Activated B cell treated with CpG ODN at 0.5 μM for 24 hours (primary cell): ENCODE measurements at regions of chr2 and their contacts with region 1.

Region 1: DNA sequence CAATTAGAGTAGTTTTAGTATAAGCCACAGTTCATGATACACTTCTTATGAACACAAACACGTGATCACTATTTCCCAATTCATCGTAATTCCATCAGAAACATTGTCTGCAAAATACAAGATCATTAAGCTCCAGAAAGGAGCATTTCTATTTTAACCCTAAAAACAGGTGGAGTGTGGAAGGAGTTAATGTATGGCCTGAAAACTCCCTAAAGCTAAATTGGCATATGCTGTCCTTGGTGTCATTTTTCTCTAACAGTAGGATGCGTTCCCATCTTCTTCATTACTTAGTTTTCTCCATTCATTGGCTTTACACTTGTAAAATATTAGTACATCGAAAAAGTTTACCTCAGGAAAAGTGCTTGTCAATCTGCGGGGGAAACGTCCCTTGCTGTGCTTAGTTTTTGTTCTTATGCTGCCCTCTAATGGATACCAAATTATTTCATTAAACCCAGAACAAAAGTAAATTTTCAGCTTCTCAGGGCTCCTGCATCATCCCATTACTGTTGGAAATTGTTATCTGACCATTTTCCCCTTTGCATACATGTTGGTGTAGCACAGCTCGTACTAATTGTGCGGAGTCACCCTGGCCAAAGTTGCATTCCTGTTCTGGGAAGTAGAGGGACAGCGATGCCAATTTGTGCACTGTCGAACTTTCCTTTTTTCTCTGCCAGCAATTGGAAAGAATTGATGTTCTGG is 153.4 kb downstream of the GPD2 start:
- DNase-seq: no peak
- ATAC-seq: peak; percentile 54
- H3K4me3 Mint-ChIP-seq: no peak overlapping the region
- H3K27ac Mint-ChIP-seq: no peak overlapping the region
- H3K4me1 Mint-ChIP-seq: peaks cover 2% of the 10 kb centered on the region
- H3K27me3 Mint-ChIP-seq: no peaks in the 10 kb centered on the region
- CTCF ChIP-seq: no peak

Region 2: DNA sequence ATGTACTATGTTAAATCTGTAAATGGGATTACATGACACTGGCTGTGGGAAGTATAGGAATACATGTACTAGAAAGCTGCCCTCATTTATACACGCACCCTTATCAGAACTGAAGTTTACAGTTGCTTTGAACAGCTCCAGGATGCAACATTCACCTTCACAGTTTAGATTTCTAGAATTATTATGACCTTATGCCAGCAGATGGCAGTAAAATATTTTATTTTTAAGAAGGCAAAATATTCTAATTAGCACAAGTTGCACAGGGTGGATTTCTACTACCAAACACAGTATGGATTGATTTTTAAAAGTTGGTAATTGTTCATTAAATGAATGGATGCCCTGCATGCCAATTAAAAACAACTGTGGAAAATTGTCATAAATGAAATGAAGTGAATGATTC is 1220.6 kb before region 1 on chr2:
- CTCF ChIA-PET with region 1: interaction called, 5 read pairs
- POLR2A ChIA-PET with region 1: no interaction called
- intact Hi-C with region 1: loop called (anchors 1 kb)
- DNase-seq: no peak
- ATAC-seq: no peak
- H3K4me3 Mint-ChIP-seq: no peak overlapping the region
- H3K27ac Mint-ChIP-seq: no peak overlapping the region
- H3K4me1 Mint-ChIP-seq: no peaks in the 10 kb centered on the region
- H3K27me3 Mint-ChIP-seq: no peaks in the 10 kb centered on the region
- CTCF ChIP-seq: no peak

Region 3: DNA sequence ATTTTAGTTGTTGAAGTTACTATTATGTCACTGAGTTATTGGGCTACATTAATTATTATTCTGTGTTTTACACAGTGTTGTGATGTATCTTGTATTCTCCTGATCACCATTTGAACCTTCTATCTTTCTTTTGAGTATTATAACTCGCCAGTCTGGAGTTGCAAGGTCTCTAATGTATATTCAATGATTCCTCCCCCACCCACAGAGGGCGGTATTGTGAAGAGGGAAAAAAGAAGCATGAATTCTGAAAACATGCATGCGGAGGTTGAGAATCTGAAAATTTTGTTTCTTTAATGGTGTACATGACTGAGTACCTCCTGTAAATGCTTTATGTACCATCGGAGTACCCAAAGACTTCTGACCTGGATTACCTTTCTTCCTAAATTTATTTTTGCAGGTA is 523.6 kb before region 1 on chr2:
- CTCF ChIA-PET with region 1: no interaction called
- POLR2A ChIA-PET with region 1: no interaction called
- intact Hi-C with region 1: loop called (anchors 1 kb)
- DNase-seq: no peak
- ATAC-seq: no peak
- H3K4me3 Mint-ChIP-seq: no peak overlapping the region
- H3K27ac Mint-ChIP-seq: no peak overlapping the region
- H3K4me1 Mint-ChIP-seq: no peaks in the 10 kb centered on the region
- H3K27me3 Mint-ChIP-seq: no peaks in the 10 kb centered on the region
- CTCF ChIP-seq: no peak

Region 4: DNA sequence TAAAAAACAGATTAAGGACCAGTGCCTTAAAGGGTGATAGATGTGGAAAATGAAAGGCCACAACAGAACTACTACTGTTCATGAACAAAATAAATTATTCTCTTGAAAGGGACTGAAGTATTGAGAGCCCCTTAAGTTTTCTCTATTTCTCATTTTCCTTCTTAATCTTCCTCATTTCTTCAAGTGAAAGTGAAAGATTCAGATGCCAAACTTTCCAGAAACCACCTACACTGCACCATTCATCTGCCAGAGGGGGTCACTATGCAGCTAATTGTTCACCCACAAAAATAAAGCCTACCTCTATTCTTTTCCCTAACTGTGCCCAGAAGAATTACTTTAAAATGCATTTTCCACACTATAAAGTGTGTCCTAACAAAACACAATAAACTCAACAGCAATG is 397.1 kb before region 1 on chr2:
- CTCF ChIA-PET with region 1: interaction called, 5 read pairs
- POLR2A ChIA-PET with region 1: no interaction called
- intact Hi-C with region 1: loop called (anchors 1 kb)
- DNase-seq: no peak
- ATAC-seq: no peak
- H3K4me3 Mint-ChIP-seq: no peak overlapping the region
- H3K27ac Mint-ChIP-seq: no peak overlapping the region
- H3K4me1 Mint-ChIP-seq: no peaks in the 10 kb centered on the region
- H3K27me3 Mint-ChIP-seq: no peaks in the 10 kb centered on the region
- CTCF ChIP-seq: no peak

Region 5: GRCh38 chr2:156562124-156562523 is 27.4 kb before region 1 on chr2:
- CTCF ChIA-PET with region 1: no interaction called
- POLR2A ChIA-PET with region 1: no interaction called
- intact Hi-C with region 1: no loop called
- DNase-seq: no peak
- ATAC-seq: no peak
- H3K4me3 Mint-ChIP-seq: no peak overlapping the region
- H3K27ac Mint-ChIP-seq: no peak overlapping the region
- H3K4me1 Mint-ChIP-seq: no peaks in the 10 kb centered on the region
- H3K27me3 Mint-ChIP-seq: no peaks in the 10 kb centered on the region
- CTCF ChIP-seq: no peak

Region 6: DNA sequence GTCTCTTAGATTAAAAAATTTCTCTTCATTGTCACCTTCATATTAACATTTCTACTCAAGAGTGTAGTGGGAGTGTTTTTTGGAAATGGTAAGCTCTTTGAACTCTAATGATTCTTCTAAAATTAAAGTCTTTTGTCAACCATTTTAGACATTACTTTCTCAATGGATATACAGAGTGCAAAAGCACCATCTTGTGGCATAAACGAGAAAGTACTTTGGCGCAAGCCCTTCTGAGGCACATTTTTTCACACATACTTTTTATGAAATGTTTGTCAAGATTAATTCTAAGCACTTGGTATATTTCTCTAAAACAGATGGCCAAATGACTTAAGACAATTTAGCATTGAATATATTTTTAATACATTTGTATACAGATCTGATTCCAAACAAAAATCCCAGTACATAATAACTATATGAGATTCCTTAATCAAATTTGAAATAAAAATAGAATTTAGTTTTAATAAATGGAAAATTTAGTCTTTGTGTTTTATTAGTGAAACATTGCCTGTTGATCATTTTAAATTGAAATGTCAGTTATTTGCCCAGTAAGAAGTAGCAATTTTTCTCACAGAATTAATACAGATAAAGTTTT is 604.7 kb after region 1 on chr2:
- CTCF ChIA-PET with region 1: no interaction called
- POLR2A ChIA-PET with region 1: no interaction called
- intact Hi-C with region 1: loop called (anchors 10 kb)
- DNase-seq: no peak
- ATAC-seq: no peak
- H3K4me3 Mint-ChIP-seq: no peak overlapping the region
- H3K27ac Mint-ChIP-seq: no peak overlapping the region
- H3K4me1 Mint-ChIP-seq: no peaks in the 10 kb centered on the region
- H3K27me3 Mint-ChIP-seq: peaks cover 6% of the 10 kb centered on the region
- CTCF ChIP-seq: no peak